GM18951 (cell line): ENCODE measurements at regions of chr12 and their contacts with region 1.

Region 1: DNA sequence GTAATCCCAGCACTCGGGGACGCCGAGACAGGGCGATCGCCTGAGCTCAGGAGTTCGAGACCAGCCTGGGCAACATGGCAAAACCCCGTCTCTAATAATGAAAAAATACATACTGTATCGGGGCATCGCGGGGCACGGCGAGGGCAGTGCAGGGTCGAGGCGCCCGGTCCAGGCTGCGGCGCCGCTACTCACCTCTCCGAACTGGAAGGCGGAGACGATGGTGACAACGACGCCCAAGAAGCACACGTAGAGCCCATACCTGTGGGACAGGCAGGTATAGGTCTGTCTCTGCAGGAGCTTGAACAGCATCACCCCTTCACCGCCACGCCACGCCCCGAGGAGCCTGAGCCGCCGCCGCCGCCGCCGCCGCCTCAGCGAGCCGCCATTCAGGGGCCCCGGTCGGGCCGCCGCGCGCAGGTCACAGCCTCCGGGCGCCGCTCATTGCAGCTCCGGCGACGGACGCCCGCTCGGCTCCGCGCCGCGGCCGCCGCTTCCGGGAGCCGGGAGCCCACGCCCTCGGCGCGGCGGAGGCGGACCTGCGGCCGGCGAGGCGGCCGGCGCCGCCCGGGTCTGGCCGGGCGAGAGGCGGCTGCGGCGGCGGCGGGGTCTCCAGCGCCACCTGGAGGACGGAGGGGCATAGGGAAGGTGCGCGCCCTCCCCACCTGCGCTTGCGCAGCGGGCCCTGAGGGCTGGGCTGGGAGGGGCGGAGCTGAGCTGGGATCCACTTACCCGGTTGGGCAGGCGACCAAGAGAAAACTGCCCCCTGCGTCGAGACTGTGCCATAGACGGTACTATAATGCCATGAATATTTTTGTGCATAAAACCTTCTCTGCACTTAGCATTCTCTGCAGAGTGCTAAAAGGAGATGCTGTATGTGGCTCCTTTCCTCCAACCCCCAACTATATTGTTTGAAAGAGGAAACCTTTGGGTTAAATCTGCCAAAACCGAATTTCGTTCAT is at the start of gene GNPTAB:
- POLR2A ChIP-seq: peak; percentile 85

Region 2: GRCh38 chr12:101773650-101774162 is 56.9 kb before region 1 on chr12:
- in situ Hi-C with region 1: loop called (anchors 10 kb)
- POLR2A ChIP-seq: no peak

Region 3: DNA sequence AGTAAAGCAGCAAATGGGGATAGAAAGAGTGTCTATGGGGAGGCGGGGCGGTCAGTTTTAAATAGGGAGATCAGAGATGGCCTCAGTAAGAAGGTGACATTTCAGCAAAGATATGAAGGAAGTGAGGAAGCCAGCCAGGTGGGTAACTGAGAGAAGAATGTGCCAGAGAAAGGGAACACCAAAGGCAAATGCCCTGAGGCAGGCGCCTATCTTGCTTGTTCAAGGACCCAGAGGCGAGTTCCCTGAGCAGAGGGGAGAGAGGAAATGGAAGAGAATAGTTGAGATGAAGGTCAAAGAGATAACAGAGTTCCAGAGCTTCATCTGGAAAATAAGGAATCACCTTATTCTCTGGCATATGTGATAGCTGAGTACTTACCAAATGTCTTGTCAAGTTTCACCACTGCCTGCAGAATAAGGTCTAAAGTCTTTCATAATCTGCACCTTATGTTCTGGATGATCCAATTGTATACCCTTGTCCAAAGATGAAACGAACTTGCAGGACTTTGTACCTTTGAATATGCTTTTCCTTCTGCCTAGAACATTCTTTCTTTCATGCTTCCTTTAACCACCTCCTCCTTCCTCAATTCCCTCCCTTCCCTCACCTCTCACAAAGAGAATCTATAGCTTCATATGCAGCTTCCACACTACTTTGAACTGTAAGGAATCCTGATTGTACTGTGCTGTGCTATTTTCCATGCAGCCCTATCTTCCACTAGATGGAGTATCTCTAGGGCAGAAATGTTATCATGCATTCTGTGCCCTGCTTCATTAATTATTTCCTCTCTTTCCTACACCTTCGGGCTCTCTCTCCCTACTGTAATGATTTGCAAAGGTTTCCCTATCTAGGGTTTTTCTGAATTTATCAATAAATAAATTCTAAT is 38.4 kb before region 1 on chr12:
- in situ Hi-C with region 1: loop called (anchors 5 kb)
- POLR2A ChIP-seq: no peak